ENCODE measurements at regions of chr17 and their contacts with region 1.

Region 1: GRCh38 chr17:28956112-28956945 is 5.0 kb upstream of the PHF12 start:
- DNase-seq: no peak
- H3K4me3 ChIP-seq: no peak overlapping the region
- CTCF ChIP-seq: no peak

Region 2: GRCh38 chr17:29012535-29012934 is 56.2 kb after region 1 on chr17:
- in situ Hi-C with region 1: loop called (anchors 5 kb)
- DNase-seq: no peak
- H3K4me3 ChIP-seq: no peak overlapping the region
- CTCF ChIP-seq: no peak

Region 3: DNA sequence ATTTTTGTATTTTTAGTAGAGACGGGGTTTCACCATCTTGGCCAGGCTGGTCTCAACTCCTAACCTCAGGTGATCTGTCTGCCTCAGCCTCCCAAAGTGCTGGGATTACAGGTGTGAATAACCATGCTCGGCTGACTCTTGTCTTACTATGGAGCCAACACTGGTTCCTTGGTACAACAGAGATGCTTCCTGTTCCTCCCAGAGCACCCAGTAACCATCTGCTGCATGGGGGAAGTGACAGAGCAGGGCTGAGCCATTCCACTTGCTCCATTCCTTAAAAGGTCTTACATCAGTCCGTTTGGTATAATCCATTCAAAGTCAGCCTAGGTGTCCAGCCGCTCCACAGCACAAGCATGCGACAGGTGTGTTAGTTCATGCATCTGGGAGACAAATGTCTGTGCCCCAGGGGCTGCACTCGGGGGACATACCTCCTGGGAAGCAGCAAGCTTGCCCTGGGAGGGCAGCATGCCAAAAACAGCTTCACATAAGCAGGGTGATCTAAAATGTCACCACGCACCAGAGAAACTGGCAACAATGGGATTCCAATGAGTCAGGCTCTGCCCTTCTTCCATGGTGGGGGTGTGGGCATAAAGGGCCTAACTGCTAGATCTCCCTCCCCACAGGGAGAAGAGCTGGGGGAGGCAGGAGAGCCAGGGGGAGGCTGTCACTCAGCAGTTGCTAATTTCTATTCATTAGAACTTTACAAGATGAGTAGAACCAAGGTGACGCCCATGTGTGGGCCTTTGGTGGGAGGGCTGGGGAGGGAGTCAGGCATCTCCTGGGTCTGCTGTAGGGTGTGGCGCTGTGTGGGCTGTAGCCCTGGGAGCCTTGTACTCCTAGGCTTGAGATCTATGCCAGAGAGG is 122.1 kb after region 1 on chr17:
- in situ Hi-C with region 1: loop called (anchors 5 kb)
- DNase-seq: no peak
- H3K4me3 ChIP-seq: no peak overlapping the region
- CTCF ChIP-seq: no peak

Region 4: DNA sequence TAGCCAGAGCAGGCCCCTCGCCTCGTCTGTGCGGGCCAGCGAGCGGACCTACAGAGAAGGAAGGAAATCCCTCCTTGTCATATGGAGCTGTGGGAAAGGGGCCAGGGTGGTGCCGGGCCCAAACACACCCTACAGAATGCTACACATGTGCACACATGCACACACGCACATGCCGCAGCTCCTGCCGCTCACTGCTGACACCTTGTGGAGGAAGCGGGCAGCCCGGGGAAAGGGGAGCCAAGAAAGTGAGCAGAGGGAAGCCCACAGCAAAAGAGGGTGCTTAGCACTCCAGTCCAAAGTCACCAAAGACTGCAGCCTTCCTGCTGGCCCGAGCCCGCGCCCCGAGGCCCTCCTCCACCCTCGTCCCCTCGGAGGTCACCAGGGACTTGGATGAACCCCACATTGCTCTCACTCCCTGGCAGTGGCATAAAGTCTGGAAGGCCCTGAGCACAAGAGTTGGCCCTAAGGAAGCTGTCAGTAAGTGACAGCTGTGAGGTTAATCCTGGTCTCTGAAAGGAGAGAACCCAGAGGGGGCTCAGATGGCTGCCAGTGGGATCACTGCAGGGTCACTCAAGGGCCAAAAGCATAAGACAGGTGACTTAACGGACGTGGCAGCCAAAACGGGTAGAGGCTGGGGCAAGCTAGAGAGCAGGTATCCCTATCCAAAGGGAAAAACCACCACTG is 155.6 kb after region 1 on chr17:
- in situ Hi-C with region 1: no loop called
- DNase-seq: no peak
- H3K4me3 ChIP-seq: no peak overlapping the region
- CTCF ChIP-seq: peak; percentile 99